CD8-positive, alpha-beta T cell (primary cell): ENCODE measurements at regions of chr14 and their contacts with region 1.

Region 1: GRCh38 chr14:67704484-67705089 is 2.9 kb downstream of the RDH12 start:
- DNase-seq: peak in 5 of 9 experiments; percentile 8 to 78 (median 22)
- ATAC-seq: peak; percentile 81
- H3K4me3 ChIP-seq: no peak overlapping the region
- H3K4me3 Mint-ChIP-seq: no peak overlapping the region
- H3K27ac ChIP-seq: no peak overlapping the region
- H3K27ac Mint-ChIP-seq: no peak overlapping the region
- H3K4me1 ChIP-seq: no peaks in the 10 kb centered on the region
- H3K4me1 Mint-ChIP-seq: no peaks in the 10 kb centered on the region
- H3K27me3 ChIP-seq: no peaks in the 10 kb centered on the region
- H3K27me3 Mint-ChIP-seq: peaks cover 6% of the 10 kb centered on the region
- CTCF ChIP-seq: peak; percentile 58

Region 2: DNA sequence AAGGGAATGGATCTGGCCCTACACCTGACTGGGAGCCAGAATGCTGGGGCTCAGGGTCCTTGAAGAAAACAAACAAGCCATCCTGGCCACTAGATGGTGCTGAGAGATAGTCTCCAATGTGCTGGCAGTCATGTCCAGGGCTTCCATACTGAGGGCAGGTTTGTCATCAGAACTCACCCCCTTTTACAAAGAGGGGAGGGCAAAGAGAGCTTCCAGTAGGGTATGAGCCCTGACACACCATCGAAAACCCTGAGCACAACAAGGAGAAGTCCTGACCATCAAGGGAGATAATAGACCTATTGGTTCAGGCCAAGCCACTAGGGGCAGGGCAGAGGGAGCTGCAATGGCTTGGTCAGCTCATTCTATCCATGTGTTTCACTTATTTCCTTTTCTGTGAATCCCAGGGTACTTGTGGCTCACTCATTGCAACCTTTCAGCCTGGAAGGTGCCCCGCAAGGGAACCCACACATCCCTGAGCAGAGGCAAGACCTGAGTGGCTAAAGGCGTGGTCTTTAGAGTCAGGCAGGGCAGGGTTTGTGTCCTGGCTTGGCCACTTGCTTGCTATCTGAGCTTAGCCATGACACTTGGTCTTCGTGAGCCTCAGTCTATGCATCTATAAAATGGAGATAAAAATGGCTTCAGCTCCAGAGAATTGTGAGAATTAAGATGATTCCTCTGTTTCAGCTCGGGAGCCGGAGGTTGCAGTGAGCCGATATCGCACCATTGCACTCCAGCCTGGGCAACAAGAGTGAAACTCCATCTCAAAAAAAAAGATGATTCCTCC is 177.7 kb before region 1 on chr14:
- CTCF ChIA-PET with region 1: interaction called, 31 read pairs
- POLR2A ChIA-PET with region 1: no interaction called
- intact Hi-C with region 1: loop called in 1 of 2 experiments (anchors 1 kb)
- DNase-seq: peak in 7 of 9 experiments; percentile 14 to 66 (median 30)
- ATAC-seq: peak; percentile 66
- H3K4me3 ChIP-seq: no peak overlapping the region
- H3K4me3 Mint-ChIP-seq: no peak overlapping the region
- H3K27ac ChIP-seq: no peak overlapping the region
- H3K27ac Mint-ChIP-seq: no peak overlapping the region
- H3K4me1 ChIP-seq: no peaks in the 10 kb centered on the region
- H3K4me1 Mint-ChIP-seq: no peaks in the 10 kb centered on the region
- H3K27me3 ChIP-seq: peaks cover 0 to 6% of the 10 kb centered on the region in 2 experiments
- H3K27me3 Mint-ChIP-seq: peaks cover 17% of the 10 kb centered on the region
- CTCF ChIP-seq: peak; percentile 55

Region 3: DNA sequence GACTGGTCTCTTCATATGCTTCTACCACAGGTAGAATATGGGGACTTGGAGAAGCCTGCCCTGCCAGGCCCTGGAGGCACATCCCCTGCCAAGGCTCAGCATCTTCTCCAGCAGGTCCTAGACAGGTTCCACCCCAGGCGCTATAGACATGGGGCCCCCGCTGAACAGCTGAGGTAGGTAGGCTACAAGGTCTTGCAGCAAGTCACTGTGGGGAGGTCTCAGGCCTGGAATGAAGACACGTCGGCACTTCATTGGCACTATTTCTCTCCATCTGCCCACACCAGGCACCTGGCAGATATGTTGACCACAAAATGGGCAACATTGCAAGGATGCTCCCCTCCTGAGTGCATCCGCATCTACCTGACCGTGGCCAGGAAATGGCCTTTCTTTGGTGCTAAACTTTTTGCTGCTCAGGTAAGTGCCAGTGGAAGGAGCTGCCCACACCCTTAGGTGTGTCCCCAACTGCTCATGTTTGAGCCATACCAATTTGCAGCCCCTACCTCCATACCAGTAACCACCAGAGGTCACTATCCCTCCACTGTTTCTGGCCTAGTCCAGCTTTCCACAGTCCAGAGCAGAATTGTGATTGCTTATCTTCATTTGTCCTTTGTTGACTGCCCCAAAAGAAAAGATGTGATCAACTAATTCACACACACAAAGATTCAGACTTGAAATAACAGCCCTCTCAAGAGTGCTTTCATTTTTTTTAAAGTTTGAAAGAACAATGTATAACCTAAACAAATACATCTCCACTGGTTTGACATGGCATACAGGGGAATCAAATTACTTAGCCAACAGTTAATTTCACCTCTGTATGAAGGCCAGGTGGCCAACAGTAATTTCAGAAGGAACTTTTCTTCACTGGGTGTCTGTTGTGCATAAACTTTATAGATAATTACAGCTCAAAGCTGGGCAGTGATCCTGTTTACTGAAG is 120.6 kb before region 1 on chr14:
- CTCF ChIA-PET with region 1: interaction called, 139 read pairs
- POLR2A ChIA-PET with region 1: no interaction called
- intact Hi-C with region 1: loop called (anchors 1 kb)
- DNase-seq: peak in 4 of 9 experiments; percentile 26 to 61 (median 40)
- ATAC-seq: peak; percentile 61
- H3K4me3 ChIP-seq: no peak overlapping the region
- H3K4me3 Mint-ChIP-seq: no peak overlapping the region
- H3K27ac ChIP-seq: no peak overlapping the region
- H3K27ac Mint-ChIP-seq: no peak overlapping the region
- H3K4me1 ChIP-seq: no peaks in the 10 kb centered on the region
- H3K4me1 Mint-ChIP-seq: no peaks in the 10 kb centered on the region
- H3K27me3 ChIP-seq: no peaks in the 10 kb centered on the region
- H3K27me3 Mint-ChIP-seq: no peaks in the 10 kb centered on the region
- CTCF ChIP-seq: peak; percentile 51

Region 4: GRCh38 chr14:67619446-67620216 is 85.0 kb before region 1 on chr14 and contains the start of gene ARG2:
- CTCF ChIA-PET with region 1: interaction called, 104 read pairs
- POLR2A ChIA-PET with region 1: no interaction called
- intact Hi-C with region 1: loop called (anchors 1 kb)
- DNase-seq: peak; percentile 92 to 99 (median 97)
- ATAC-seq: peak; percentile 89
- H3K4me3 ChIP-seq: peak within 1 kb of the TSS; percentile 73 to 90
- H3K4me3 Mint-ChIP-seq: peak within 1 kb of the TSS; percentile 88
- H3K27ac ChIP-seq: peak within 1 kb of the TSS; percentile 78 to 86
- H3K27ac Mint-ChIP-seq: peak within 1 kb of the TSS; percentile 86
- H3K4me1 ChIP-seq: peaks cover 17% of the 10 kb centered on the region
- H3K4me1 Mint-ChIP-seq: peaks cover 32% of the 10 kb centered on the region
- H3K27me3 ChIP-seq: no peaks in the 10 kb centered on the region
- H3K27me3 Mint-ChIP-seq: peaks cover 2% of the 10 kb centered on the region
- CTCF ChIP-seq: no peak
- total RNA-seq, gene ARG2: 1.5 to 3.7 TPM

Region 5: DNA sequence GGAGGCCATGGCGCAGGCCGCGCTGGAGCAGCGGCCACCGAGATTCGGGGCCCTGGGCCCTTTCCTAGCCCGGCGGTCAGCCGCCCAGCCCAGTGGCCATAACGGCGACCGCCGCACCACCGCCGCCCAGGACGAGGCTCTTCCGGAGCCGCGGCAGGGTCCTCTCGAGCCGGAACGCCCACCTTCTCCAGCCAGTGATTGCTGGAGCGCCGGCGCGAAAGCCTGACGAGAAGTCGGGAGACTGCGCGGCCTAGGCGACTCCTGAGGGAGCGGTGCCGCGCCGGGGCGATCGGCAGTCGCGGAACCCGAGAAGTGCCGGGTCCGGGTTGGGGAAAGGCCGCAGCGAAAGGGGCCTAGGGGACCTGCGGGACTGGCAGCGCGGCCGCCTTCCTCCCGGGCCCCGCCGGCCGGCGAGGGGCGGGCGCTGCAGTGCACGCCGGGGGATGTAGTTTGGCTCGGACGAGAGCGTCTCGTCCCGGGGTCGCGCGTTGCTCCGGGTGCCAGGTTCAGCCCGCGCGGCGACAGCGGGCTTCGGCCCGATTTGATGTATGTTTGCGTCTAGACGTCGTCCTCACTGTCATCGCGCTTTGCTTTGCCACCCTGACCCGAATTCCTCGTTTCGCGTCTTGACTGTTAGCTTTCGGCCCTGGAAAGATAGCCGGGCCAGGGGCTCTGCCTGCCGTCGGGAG is 30.0 kb before region 1 on chr14 and contains the start of gene VTI1B:
- CTCF ChIA-PET with region 1: interaction called, 10 read pairs
- POLR2A ChIA-PET with region 1: no interaction called
- intact Hi-C with region 1: loop called in 1 of 2 experiments (anchors 5 kb)
- DNase-seq: peak; percentile 64 to 89 (median 79)
- ATAC-seq: peak; percentile 92
- H3K4me3 ChIP-seq: peak within 1 kb of the TSS; percentile 78 to 82
- H3K4me3 Mint-ChIP-seq: peak within 1 kb of the TSS; percentile 94
- H3K27ac ChIP-seq: peak within 1 kb of the TSS; percentile 93 to 95
- H3K27ac Mint-ChIP-seq: peak within 1 kb of the TSS; percentile 93
- H3K4me1 ChIP-seq: peaks cover 32% of the 10 kb centered on the region
- H3K4me1 Mint-ChIP-seq: peaks cover 39% of the 10 kb centered on the region
- H3K27me3 ChIP-seq: no peaks in the 10 kb centered on the region
- H3K27me3 Mint-ChIP-seq: no peaks in the 10 kb centered on the region
- CTCF ChIP-seq: no peak
- total RNA-seq, gene VTI1B: 27.6 to 31.1 TPM

Region 6: DNA sequence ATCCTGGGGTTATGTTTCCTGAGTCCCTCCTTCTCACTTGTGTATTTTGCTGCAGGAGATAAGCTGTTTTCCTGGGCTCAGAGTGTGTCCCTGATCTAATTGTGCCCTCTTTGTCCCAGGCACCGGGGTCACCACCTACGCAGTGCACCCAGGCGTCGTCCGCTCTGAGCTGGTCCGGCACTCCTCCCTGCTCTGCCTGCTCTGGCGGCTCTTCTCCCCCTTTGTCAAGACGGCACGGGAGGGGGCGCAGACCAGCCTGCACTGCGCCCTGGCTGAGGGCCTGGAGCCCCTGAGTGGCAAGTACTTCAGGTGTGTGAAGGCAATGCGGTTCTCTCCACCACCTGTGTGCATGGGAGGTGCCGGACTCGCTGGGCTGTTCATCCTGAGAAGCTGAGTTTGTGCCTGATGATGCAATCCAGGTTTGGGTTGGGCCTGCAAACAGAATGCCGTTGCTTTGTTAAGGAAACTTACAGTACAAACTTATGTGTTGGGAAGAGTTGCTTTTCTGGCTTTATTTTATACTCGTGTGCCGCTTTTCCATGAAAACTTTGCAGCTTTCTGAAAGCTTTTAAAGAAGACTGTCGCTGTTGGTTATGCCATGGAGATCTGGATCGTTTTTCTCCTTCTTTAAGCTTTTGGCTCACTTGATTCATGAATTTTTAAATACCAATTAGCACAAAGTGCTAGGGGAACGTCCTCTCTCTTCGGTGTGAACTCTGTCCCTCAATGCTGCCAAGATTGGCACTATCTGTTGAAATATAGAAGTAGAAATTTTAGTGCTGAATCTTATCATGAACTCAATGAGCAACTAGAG is 24.7 kb after region 1 on chr14:
- CTCF ChIA-PET with region 1: no interaction called
- POLR2A ChIA-PET with region 1: no interaction called
- intact Hi-C with region 1: no loop called
- DNase-seq: no peak
- ATAC-seq: no peak
- H3K4me3 ChIP-seq: no peak overlapping the region
- H3K4me3 Mint-ChIP-seq: no peak overlapping the region
- H3K27ac ChIP-seq: no peak overlapping the region
- H3K27ac Mint-ChIP-seq: no peak overlapping the region
- H3K4me1 ChIP-seq: no peaks in the 10 kb centered on the region
- H3K4me1 Mint-ChIP-seq: no peaks in the 10 kb centered on the region
- H3K27me3 ChIP-seq: peaks cover 0 to 3% of the 10 kb centered on the region in 2 experiments
- H3K27me3 Mint-ChIP-seq: peaks cover 16% of the 10 kb centered on the region
- CTCF ChIP-seq: no peak

Region 7: DNA sequence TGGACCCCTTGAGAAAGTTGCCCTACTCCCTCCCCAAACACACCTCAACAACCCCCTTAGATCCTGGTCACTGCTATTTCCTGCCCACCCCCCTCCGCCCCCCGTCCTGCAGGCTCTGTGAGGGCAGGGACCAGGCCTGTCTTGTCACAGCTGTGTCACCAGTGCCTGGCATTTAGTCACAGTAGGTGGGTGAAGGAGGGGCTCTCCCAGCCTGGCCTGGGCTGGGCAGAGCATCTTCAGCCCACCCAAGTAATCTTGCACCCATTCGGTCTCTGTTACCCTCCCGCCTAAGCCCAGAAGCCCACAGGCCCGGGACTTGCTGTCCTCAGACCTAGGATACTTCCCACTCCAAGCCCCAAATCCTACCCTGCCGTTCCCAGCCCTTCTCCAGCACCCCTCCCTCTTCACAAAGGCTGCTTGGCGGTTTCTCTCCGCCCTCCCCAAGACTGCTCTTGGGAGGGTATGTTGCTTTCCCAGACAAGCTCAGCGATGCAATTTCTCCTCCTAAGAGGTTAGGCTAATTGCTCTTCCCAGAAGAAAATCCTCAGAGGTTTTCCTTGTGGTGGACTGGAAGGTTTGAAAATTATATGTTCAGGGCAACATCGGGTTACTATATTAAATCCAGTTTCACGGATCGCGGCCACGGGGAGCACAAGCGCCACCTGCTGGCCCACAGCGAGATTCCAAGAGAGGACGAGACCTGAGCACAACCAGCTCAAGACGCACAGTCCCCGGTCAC is 1139.1 kb after region 1 on chr14:
- CTCF ChIA-PET with region 1: no interaction called
- POLR2A ChIA-PET with region 1: no interaction called
- intact Hi-C with region 1: no loop called
- DNase-seq: peak; percentile 48 to 85 (median 77)
- ATAC-seq: peak; percentile 89
- H3K4me3 ChIP-seq: no peak overlapping the region
- H3K4me3 Mint-ChIP-seq: peak overlapping the region; percentile 53
- H3K27ac ChIP-seq: no peak overlapping the region
- H3K27ac Mint-ChIP-seq: no peak overlapping the region
- H3K4me1 ChIP-seq: peaks cover 17% of the 10 kb centered on the region
- H3K4me1 Mint-ChIP-seq: peaks cover 20% of the 10 kb centered on the region
- H3K27me3 ChIP-seq: no peaks in the 10 kb centered on the region
- H3K27me3 Mint-ChIP-seq: no peaks in the 10 kb centered on the region
- CTCF ChIP-seq: peak; percentile 89